Heart left ventricle (tissue), 16 donors: ENCODE measurements at regions of chr5 and their contacts with region 1.

Region 1: GRCh38 chr5:143403593-143404415 is at the start of gene NR3C1:
- DNase-seq: peak; percentile 90 to 96 (median 92)
- ATAC-seq: peak; percentile 61 to 90 (median 77)
- H3K4me3 ChIP-seq: peak within 1 kb of the TSS; percentile 64 to 95 (median 88)
- H3K27ac ChIP-seq: peak within 1 kb of the TSS; percentile 95 to 100 (median 99)
- H3K4me1 ChIP-seq: peaks cover 0 to 38% (median 19%) of the 10 kb centered on the region in 12 donors
- H3K27me3 ChIP-seq: no peaks in the 10 kb centered on the region
- CTCF ChIP-seq: peak; percentile 38 to 86 (median 65)
- POLR2A ChIP-seq: peak in 1 of 2 donors; percentile 58
- total RNA-seq, gene NR3C1: 29.6 to 73.7 (median 50.6) TPM

Region 2: GRCh38 chr5:142713121-142713706 is 690.6 kb before region 1 on chr5:
- intact Hi-C with region 1: loop called in 1 of 10 experiments (anchors 10 kb)
- DNase-seq: peak; percentile 88 to 94 (median 91)
- ATAC-seq: peak; percentile 60 to 88 (median 86)
- H3K4me3 ChIP-seq: peak overlapping the region in 11 of 12 donors; percentile 31 to 63 (median 56)
- H3K27ac ChIP-seq: peak overlapping the region; percentile 63 to 96 (median 88)
- H3K4me1 ChIP-seq: peaks cover 0 to 46% (median 25%) of the 10 kb centered on the region in 12 donors
- H3K27me3 ChIP-seq: no peaks in the 10 kb centered on the region
- CTCF ChIP-seq: peak; percentile 91 to 99 (median 97)
- POLR2A ChIP-seq: peak in 1 of 2 donors; percentile 27

Region 3: GRCh38 chr5:143008809-143009521 is 394.8 kb before region 1 on chr5:
- intact Hi-C with region 1: loop called in 7 of 10 experiments (anchors 5 to 10 kb)
- DNase-seq: peak in 2 of 5 donors; percentile 26 to 39
- ATAC-seq: peak in 3 of 4 donors; percentile 29 to 53 (median 42)
- H3K4me3 ChIP-seq: no peak overlapping the region
- H3K27ac ChIP-seq: peak overlapping the region in 5 of 12 donors; percentile 13 to 64 (median 35)
- H3K4me1 ChIP-seq: peaks cover 0 to 67% (median 37%) of the 10 kb centered on the region in 12 donors
- H3K27me3 ChIP-seq: no peaks in the 10 kb centered on the region
- CTCF ChIP-seq: no peak
- POLR2A ChIP-seq: no peak

Region 4: DNA sequence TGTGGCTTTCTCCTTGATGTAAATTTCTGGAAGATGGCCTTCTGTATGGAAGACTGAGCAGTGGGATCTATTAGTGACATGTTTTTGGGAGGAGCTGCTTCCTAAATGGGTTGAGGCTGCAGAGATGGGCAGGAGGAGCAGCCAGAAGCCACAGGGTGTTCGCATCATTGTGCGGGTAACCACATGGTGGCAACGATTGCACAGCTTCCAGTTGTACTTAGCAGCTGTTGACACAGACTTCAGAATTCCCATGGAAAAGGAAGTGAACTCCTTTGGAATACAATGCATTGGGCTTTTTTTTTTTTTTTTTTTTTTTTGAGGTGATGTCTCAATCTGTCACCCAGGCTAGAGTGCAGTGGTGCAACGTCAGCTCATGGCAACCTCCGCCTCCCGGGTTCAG is 297.6 kb before region 1 on chr5:
- intact Hi-C with region 1: loop called in 6 of 10 experiments (anchors 1 to 10 kb)
- DNase-seq: peak in 4 of 5 donors; percentile 38 to 56 (median 50)
- ATAC-seq: peak; percentile 53 to 86 (median 68)
- H3K4me3 ChIP-seq: no peak overlapping the region
- H3K27ac ChIP-seq: no peak overlapping the region
- H3K4me1 ChIP-seq: peaks cover 0 to 66% (median 43%) of the 10 kb centered on the region in 12 donors
- H3K27me3 ChIP-seq: no peaks in the 10 kb centered on the region
- CTCF ChIP-seq: peak in 10 of 12 donors; percentile 8 to 55 (median 36)
- POLR2A ChIP-seq: no peak

Region 5: GRCh38 chr5:143182901-143183820 is 220.6 kb before region 1 on chr5:
- intact Hi-C with region 1: no loop called
- DNase-seq: peak in 4 of 5 donors; percentile 35 to 64 (median 47)
- ATAC-seq: peak in 3 of 4 donors; percentile 46 to 83 (median 79)
- H3K4me3 ChIP-seq: no peak overlapping the region
- H3K27ac ChIP-seq: peak overlapping the region in 1 of 12 donors; percentile 18
- H3K4me1 ChIP-seq: peaks cover 0 to 68% (median 38%) of the 10 kb centered on the region in 12 donors
- H3K27me3 ChIP-seq: no peaks in the 10 kb centered on the region
- CTCF ChIP-seq: no peak
- POLR2A ChIP-seq: no peak

Region 6: GRCh38 chr5:143213851-143214363 is 189.9 kb before region 1 on chr5:
- intact Hi-C with region 1: loop called in 6 of 10 experiments (anchors 5 to 10 kb)
- DNase-seq: no peak
- ATAC-seq: peak in 2 of 4 donors; percentile 26 to 62
- H3K4me3 ChIP-seq: no peak overlapping the region
- H3K27ac ChIP-seq: peak overlapping the region in 10 of 12 donors; percentile 32 to 79 (median 63)
- H3K4me1 ChIP-seq: peaks cover 0 to 64% (median 27%) of the 10 kb centered on the region in 12 donors
- H3K27me3 ChIP-seq: no peaks in the 10 kb centered on the region
- CTCF ChIP-seq: no peak
- POLR2A ChIP-seq: no peak

Region 7: GRCh38 chr5:143557061-143557818 is 153.4 kb after region 1 on chr5:
- intact Hi-C with region 1: no loop called
- DNase-seq: no peak
- ATAC-seq: peak in 3 of 4 donors; percentile 56 to 85 (median 64)
- H3K4me3 ChIP-seq: no peak overlapping the region
- H3K27ac ChIP-seq: peak overlapping the region in 8 of 12 donors; percentile 4 to 43 (median 14)
- H3K4me1 ChIP-seq: peaks cover 0 to 27% (median 8%) of the 10 kb centered on the region in 12 donors
- H3K27me3 ChIP-seq: no peaks in the 10 kb centered on the region
- CTCF ChIP-seq: no peak
- POLR2A ChIP-seq: no peak

Region 8: DNA sequence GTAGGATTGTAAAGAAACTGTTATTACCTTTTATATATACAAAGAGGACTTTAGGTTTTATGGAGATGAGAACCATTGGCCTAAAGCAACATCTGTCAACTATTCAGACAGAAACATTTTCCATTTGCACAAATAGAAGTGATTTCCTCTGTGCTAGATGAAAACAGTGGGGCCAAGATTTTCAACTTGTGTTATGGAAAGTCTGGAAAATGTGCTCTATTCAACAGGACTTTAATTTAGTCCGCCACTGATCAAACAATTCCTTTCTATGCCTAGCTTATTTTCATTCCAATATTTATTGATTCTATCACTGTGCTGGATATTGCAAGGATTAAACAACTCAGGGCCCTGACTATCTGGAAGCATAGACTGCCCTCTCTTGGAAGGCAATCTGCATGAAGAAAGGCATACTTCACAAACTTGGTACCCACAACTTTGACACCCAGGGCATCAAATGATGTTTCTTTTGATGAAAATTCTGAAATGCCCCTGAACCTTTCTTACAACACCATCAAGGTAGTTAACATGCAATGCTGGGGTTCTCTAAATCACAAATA is 281.5 kb after region 1 on chr5:
- intact Hi-C with region 1: loop called in 3 of 10 experiments (anchors 2 to 5 kb)
- DNase-seq: no peak
- ATAC-seq: no peak
- H3K4me3 ChIP-seq: no peak overlapping the region
- H3K27ac ChIP-seq: no peak overlapping the region
- H3K4me1 ChIP-seq: peaks cover 0 to 23% (median 10%) of the 10 kb centered on the region in 12 donors
- H3K27me3 ChIP-seq: no peaks in the 10 kb centered on the region
- CTCF ChIP-seq: peak in 9 of 12 donors; percentile 11 to 45 (median 29)
- POLR2A ChIP-seq: no peak